Lower leg skin (tissue), 4 donors: ENCODE measurements at regions of chr6 and their contacts with region 1.

Region 1: DNA sequence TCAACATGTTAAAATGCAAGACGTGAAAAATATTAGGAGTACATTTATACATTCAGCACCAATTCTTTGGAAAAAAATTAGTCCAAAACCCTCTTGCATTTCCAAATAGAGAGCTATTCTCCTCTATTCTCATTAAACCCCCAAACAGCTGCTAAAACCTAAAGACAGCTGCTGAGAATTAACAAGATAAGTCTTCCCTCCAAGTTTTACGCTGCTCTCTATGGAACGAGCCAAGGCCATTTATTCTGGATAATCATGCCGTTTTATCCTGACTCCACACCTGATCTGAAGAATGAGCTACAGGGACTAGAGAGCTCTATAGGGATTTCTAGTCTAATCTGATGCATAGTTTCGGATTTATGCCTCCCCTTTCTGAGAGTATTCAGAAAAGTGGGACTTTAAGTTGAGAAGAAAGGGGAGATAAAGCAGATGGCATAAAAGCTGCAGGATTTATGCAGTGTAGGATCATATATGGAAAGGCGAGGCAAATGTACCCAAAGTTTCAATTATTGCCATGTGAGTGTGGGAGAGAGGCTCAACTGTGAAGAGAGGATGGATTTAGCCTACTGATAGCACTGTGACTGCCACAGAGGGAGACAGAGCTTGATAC is 64.7 kb upstream of the HS3ST5 start:
- DNase-seq: no peak
- H3K4me3 ChIP-seq: no peak overlapping the region
- CTCF ChIP-seq: no peak
- POLR2A ChIP-seq: no peak

Region 2: GRCh38 chr6:114362957-114363356 is 44.6 kb before region 1 on chr6:
- intact Hi-C with region 1: loop called (anchors 1 kb)
- DNase-seq: no peak
- H3K4me3 ChIP-seq: no peak overlapping the region
- CTCF ChIP-seq: no peak
- POLR2A ChIP-seq: no peak

Region 3: GRCh38 chr6:114430534-114431124 is 23.1 kb after region 1 on chr6:
- intact Hi-C with region 1: loop called (anchors 1 kb)
- DNase-seq: no peak
- H3K4me3 ChIP-seq: no peak overlapping the region
- CTCF ChIP-seq: no peak
- POLR2A ChIP-seq: no peak

Region 4: DNA sequence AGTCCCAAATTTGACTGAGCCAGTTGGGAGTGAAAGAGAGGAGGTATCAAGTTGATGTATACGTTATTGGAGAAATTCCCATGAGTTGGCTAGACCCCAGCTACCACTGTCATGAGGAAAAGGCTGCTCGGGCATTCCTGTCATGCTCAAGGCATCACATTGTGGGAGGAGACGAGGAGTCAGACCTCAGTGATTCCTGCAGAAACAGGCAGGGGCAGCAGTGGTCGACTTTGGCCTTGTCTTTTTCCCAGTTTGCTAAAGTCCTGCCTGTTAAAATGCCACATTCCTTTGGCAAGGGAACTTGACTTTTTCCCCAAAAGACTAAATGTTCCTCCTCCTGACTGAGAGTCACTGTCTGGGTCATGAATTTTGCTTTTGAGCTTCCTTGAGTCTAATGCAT is 230.8 kb after region 1 on chr6:
- intact Hi-C with region 1: no loop called
- DNase-seq: no peak
- H3K4me3 ChIP-seq: no peak overlapping the region
- CTCF ChIP-seq: no peak
- POLR2A ChIP-seq: no peak